ENCODE measurements at regions of chr19 and their contacts with region 1.

Region 1: GRCh38 chr19:19170053-19170872 is at the start of gene MEF2B:
- DNase-seq: no peak
- H3K4me3 ChIP-seq: peak within 1 kb of the TSS; percentile 39
- H3K27ac ChIP-seq: no peak within 1 kb of the TSS
- H3K27me3 ChIP-seq: no peaks in the 10 kb centered on the region
- CTCF ChIP-seq: no peak
- polyA plus RNA-seq, gene MEF2B: 0.38 and 0.74 TPM in 2 replicates

Region 2: DNA sequence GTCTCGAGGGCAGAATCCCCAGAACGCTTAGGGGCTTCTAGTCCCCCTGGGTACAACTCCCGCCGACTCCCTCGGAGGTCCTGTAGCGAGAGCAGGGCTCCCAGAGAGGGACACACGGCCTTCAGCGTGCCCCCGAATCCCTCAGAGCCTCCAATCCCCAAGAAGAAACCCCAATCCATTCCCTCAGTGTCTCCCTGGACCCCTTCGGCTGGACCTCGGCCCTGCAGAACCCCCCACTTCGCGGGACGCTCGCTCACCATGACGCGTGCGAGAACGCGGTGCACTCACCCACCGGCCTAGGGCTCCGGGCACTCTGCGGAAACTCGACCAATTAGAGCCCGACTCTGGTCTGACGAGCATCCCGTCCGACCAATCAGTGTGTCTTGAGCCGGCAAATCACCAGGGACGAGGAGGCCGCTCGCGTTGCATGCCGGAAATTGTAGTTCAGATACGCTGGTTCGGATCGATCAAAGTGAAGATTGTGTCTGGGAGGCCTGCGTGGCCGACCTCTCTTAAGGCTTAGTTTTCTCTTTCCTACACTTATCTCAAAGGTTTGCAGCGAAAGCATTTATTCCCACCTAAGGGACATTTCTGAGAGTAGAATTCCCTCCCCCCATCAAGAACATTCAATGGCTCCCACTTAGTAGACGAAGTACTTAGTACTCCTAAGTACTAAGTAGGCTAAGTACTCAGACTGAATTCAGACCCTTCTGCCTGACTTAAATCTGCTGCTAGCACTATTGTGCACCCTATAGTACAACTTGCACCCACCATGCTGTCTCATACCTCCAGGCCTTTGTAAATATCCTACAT is 31.9 kb before region 1 on chr19 and contains the start of gene TMEM161A:
- CTCF ChIA-PET with region 1: interaction called, 14 read pairs
- POLR2A ChIA-PET with region 1: no interaction called
- DNase-seq: peak; percentile 99
- H3K4me3 ChIP-seq: peak within 1 kb of the TSS; percentile 94
- H3K27ac ChIP-seq: peak within 1 kb of the TSS; percentile 39
- H3K27me3 ChIP-seq: peaks cover 4% of the 10 kb centered on the region
- CTCF ChIP-seq: no peak
- polyA plus RNA-seq, gene TMEM161A: 16.0 and 21.7 TPM in 2 replicates

Region 3: DNA sequence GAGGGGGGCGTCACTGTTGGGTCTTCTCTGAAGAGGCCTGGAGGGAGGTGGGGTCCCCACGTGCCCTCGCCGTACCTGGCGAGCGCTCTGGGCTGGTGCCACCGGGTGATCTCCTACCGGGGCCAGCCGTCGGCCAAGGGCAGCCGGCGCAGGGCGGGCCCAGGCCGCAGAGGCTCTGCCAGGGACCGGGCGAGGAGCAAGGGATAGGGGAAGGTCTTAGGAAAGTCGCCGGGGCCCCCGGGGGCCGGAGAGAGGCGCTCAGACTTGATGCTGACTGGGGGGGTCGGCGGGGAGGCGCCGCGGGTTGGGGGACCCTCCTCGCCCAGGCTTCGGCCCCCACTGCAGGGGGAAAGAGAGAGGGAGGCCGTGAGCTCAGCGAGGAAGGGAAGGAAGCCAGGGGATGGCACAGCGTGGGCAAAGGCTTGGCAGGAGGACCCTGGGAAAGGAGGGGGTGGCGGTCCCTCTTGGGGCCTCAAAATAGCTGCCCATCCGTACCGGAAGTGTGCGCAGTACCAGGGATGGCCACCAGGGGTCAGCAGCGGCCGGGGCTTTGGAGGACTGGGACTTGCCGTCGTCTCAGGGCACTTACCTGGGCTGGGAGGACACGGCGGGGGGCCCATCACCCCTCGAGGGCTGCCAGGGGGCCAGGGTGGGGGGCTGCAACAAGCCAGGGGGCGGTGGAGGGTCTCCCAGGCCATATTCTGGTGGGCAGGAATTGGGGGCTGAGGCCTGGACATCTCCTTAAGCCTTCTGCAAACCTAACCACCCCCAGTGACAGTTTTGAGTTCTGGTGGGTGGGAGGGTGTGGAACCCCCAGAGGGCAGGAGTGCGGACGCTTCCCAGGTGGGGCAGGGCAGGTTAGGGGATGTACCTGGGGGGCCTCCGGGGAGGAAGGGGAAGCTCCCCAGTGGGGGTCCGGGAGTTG is 24.3 kb before region 1 on chr19:
- CTCF ChIA-PET with region 1: interaction called, 102 read pairs
- POLR2A ChIA-PET with region 1: interaction called, 3 read pairs
- DNase-seq: peak; percentile 29
- H3K4me3 ChIP-seq: no peak overlapping the region
- H3K27ac ChIP-seq: no peak overlapping the region
- H3K27me3 ChIP-seq: peaks cover 4% of the 10 kb centered on the region
- CTCF ChIP-seq: peak; percentile 91

Region 4: GRCh38 chr19:19155495-19156219 is 14.6 kb before region 1 on chr19:
- CTCF ChIA-PET with region 1: interaction called, 35 read pairs
- POLR2A ChIA-PET with region 1: no interaction called
- DNase-seq: no peak
- H3K4me3 ChIP-seq: no peak overlapping the region
- H3K27ac ChIP-seq: no peak overlapping the region
- H3K27me3 ChIP-seq: no peaks in the 10 kb centered on the region
- CTCF ChIP-seq: no peak

Region 5: DNA sequence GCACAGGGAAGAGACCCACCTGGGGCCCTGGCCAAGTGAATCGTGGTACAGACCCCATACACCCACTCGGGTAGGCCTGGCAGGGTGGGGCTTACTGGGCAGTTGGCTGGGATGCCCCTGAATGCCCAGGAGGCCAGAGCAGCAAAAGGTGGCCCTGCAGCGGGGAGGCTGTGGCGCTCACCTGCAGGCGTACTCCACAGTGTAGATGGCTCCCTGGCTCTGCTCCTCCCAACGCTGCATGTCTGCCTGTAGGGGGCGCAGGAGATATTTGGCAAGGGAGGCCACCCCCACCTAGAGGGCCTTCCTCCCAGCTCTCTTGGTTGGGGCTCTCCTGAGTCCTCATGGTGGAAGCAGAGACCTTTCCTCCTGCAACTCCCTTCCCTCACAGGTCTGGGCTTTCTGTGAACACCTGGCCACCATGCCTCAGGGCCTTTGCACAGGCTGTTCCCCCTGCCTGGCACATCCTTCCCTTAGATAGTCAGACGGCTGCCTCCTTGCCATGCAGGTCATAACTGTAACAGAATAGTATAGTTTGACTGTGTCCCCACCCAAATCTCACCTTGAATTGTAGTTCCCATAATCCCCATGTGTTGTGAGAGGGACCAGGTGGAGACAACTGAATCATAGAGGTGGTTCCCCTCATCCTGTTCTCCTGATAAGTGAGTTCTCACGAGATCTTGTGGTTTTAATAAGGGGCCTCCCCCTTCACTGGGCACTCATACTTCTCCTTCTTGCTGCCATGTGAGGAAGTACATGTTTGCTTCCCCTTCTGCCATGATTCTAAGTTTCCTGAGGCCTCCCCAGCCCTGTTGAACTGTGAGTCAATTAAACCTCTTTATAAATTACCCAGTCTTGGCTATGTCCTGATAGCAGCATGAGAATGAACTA is 15.8 kb after region 1 on chr19:
- CTCF ChIA-PET with region 1: interaction called, 15 read pairs
- POLR2A ChIA-PET with region 1: interaction called, 8 read pairs
- DNase-seq: no peak
- H3K4me3 ChIP-seq: no peak overlapping the region
- H3K27ac ChIP-seq: no peak overlapping the region
- H3K27me3 ChIP-seq: no peaks in the 10 kb centered on the region
- CTCF ChIP-seq: peak; percentile 64

Region 6: GRCh38 chr19:19192078-19192882 is 22.0 kb after region 1 on chr19 and contains the starts of genes BORCS8 and RFXANK:
- CTCF ChIA-PET with region 1: interaction called, 15 read pairs
- POLR2A ChIA-PET with region 1: interaction called, 4 read pairs
- DNase-seq: peak; percentile 98
- H3K4me3 ChIP-seq: peak within 1 kb of the TSS; percentile 98
- H3K27ac ChIP-seq: peak within 1 kb of the TSS; percentile 98
- H3K27me3 ChIP-seq: no peaks in the 10 kb centered on the region
- CTCF ChIP-seq: no peak
- polyA plus RNA-seq, gene BORCS8: 16.6 and 18.5 TPM in 2 replicates
- polyA plus RNA-seq, gene RFXANK: 53.3 and 79.9 TPM in 2 replicates

Measured in AG04450 (cell line).